Endothelial cell of umbilical vein (primary cell): ENCODE measurements at regions of chr1 and their contacts with region 1.

Region 1: GRCh38 chr1:65687428-65688214 is 105.1 kb upstream of the PDE4B start:
- DNase-seq: peak; percentile 87
- H3K4me3 ChIP-seq: no peak overlapping the region
- H3K27ac ChIP-seq: no peak overlapping the region
- H3K4me1 ChIP-seq: peaks cover 15% of the 10 kb centered on the region
- H3K27me3 ChIP-seq: no peaks in the 10 kb centered on the region
- CTCF ChIP-seq: peak; percentile 72 to 86
- POLR2A ChIP-seq: no peak

Region 2: GRCh38 chr1:64834734-64835133 is 852.9 kb before region 1 on chr1:
- CTCF ChIA-PET with region 1: interaction called, 3 read pairs
- POLR2A ChIA-PET with region 1: no interaction called
- dilution Hi-C with region 1: no loop called
- intact Hi-C with region 1: loop called (anchors 10 kb)
- DNase-seq: no peak
- H3K4me3 ChIP-seq: no peak overlapping the region
- H3K27ac ChIP-seq: peak overlapping the region; percentile 4
- H3K4me1 ChIP-seq: peaks cover 48% of the 10 kb centered on the region
- H3K27me3 ChIP-seq: no peaks in the 10 kb centered on the region
- CTCF ChIP-seq: no peak
- POLR2A ChIP-seq: no peak

Region 3: GRCh38 chr1:65075123-65075976 is 612.3 kb before region 1 on chr1:
- CTCF ChIA-PET with region 1: interaction called, 22 read pairs
- POLR2A ChIA-PET with region 1: no interaction called
- dilution Hi-C with region 1: no loop called
- intact Hi-C with region 1: loop called (anchors 1 kb)
- DNase-seq: peak; percentile 75
- H3K4me3 ChIP-seq: no peak overlapping the region
- H3K27ac ChIP-seq: no peak overlapping the region
- H3K4me1 ChIP-seq: no peaks in the 10 kb centered on the region
- H3K27me3 ChIP-seq: peaks cover 0 to 3% of the 10 kb centered on the region in 2 experiments
- CTCF ChIP-seq: peak; percentile 74 to 76
- POLR2A ChIP-seq: no peak

Region 4: DNA sequence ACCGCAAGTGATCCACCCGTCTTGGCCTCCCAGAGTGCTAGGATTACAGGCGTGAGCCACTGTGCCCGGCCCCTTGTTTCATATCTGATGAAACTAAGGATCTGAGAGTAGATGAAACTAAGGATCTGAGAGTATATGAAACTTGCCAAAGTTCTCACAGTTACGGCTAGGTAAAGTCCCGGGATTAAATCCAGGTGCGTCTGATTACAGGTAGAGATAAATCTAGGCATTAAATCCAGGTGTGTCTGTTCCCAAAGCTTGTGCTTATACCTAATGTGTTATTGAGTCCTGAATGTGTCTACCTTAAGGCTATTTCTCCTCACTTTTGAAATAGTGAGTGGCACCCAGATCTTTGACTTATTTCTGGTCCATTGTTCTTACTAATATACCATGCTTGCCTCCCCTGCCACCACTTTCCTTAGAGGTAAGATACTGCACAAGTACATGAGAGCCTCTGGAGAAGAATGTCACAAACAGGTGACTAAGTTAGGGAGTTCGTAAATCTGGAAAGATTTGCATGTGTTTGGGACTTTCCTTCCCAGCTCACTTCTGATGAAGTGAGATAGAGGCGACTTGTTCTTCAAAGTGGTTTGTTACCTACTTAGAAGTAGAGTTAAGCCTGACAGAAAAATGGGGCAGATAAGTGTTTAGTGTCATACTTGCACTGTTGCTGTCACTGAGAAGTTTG is 473.1 kb before region 1 on chr1:
- CTCF ChIA-PET with region 1: interaction called, 169 read pairs
- POLR2A ChIA-PET with region 1: no interaction called
- dilution Hi-C with region 1: no loop called
- intact Hi-C with region 1: loop called (anchors 1 kb)
- DNase-seq: no peak
- H3K4me3 ChIP-seq: no peak overlapping the region
- H3K27ac ChIP-seq: no peak overlapping the region
- H3K4me1 ChIP-seq: no peaks in the 10 kb centered on the region
- H3K27me3 ChIP-seq: no peaks in the 10 kb centered on the region
- CTCF ChIP-seq: no peak
- POLR2A ChIP-seq: no peak

Region 5: DNA sequence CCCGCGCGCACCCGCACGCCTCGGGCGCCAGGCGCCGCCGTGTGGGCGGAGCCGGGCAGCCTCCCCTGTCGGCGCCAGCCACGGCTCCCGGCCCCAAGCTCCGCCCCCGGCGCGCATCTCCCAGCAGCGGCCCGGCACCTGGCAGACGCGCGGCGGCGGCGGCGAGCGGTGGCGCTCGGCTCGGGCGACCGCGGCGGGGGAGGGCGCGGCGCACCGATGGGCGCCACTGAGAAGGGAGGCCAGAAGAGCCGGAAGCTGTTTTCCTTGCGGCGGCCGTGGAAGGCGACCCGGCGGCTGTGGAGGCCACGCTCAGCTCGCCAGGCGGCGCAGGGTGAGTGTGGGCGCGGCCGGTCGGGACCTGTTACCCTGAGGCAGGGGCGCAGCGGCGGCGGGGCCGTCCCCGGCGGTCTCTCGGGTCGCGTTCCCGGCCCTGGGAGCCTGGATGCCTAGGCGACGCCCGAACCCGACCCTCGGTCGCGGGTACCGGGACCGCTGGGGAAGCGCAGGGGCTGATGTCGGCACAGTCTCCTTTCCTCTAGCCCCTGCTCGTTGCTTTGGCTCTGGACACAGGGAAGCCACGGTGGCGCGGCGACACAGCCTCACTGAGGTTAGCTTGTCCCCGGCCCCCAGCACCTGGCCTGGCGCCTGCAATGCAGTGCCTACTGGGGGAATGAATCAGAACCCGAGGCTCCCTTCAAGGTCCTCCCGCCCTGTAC is 433.1 kb before region 1 on chr1:
- CTCF ChIA-PET with region 1: interaction called, 24 read pairs
- POLR2A ChIA-PET with region 1: no interaction called
- dilution Hi-C with region 1: no loop called
- intact Hi-C with region 1: loop called (anchors 1 kb)
- DNase-seq: peak; percentile 57
- H3K4me3 ChIP-seq: peak overlapping the region; percentile 44 to 80 (median 70)
- H3K27ac ChIP-seq: peak overlapping the region; percentile 1
- H3K4me1 ChIP-seq: peaks cover 13% of the 10 kb centered on the region
- H3K27me3 ChIP-seq: no peaks in the 10 kb centered on the region
- CTCF ChIP-seq: peak in 1 of 2 donors; percentile 30
- POLR2A ChIP-seq: no peak

Region 6: DNA sequence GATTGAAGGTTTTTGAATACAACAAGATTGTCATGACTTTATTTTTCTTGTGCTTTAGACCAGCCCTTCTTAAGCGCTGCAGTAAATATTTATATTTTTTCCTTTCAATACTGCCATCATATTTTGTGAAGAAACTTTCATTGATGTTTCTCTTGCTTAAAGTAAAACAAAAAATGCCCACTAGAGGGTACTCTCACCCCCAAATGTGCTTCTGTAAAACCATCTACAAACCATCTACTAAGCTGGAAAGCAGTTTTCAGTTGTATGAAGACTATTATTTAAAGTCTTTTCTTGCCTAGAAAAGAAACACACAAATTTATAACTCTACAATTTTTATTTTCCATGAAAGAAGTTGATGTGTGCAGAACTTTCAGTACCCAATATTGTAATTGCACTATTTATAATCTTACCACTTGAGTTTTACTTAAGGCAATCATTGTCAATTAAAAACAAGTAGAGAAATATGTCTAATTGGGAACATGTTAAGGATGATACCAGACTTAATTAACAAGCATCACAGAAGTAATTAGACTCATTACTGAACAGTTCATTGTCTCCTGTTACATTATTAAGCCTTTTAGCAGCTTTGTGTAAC is 256.4 kb before region 1 on chr1:
- CTCF ChIA-PET with region 1: interaction called, 104 read pairs
- POLR2A ChIA-PET with region 1: no interaction called
- dilution Hi-C with region 1: no loop called
- intact Hi-C with region 1: loop called (anchors 1 kb)
- DNase-seq: peak; percentile 79
- H3K4me3 ChIP-seq: peak overlapping the region in 1 of 3 experiments; percentile 26
- H3K27ac ChIP-seq: peak overlapping the region; percentile 97
- H3K4me1 ChIP-seq: peaks cover 33% of the 10 kb centered on the region
- H3K27me3 ChIP-seq: no peaks in the 10 kb centered on the region
- CTCF ChIP-seq: peak; percentile 35 to 36
- POLR2A ChIP-seq: no peak

Region 7: DNA sequence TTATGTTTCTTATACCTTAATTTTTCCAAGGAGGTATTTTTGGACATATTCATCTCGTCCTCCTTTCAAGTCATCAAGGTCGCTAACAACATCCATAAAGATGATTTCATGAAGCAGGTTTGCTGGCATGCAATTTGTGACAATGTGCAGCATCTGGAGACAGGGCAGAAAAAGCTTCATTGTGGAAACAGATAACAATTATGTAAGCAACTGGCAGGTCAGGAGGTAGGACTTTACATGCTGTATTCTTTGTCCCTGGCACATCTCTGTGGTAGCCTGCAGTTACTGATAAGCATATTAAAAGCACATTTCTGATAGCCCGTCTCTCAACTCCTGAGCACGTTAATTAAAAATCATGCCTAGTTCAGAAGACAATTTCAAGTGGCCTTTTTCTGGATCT is 110.3 kb before region 1 on chr1:
- CTCF ChIA-PET with region 1: no interaction called
- POLR2A ChIA-PET with region 1: no interaction called
- dilution Hi-C with region 1: no loop called
- intact Hi-C with region 1: no loop called
- DNase-seq: no peak
- H3K4me3 ChIP-seq: no peak overlapping the region
- H3K27ac ChIP-seq: no peak overlapping the region
- H3K4me1 ChIP-seq: no peaks in the 10 kb centered on the region
- H3K27me3 ChIP-seq: no peaks in the 10 kb centered on the region
- CTCF ChIP-seq: no peak
- POLR2A ChIP-seq: no peak

Region 8: GRCh38 chr1:65674522-65674921 is 13.1 kb before region 1 on chr1:
- CTCF ChIA-PET with region 1: interaction called, 31 read pairs
- POLR2A ChIA-PET with region 1: no interaction called
- dilution Hi-C with region 1: no loop called
- intact Hi-C with region 1: no loop called
- DNase-seq: no peak
- H3K4me3 ChIP-seq: no peak overlapping the region
- H3K27ac ChIP-seq: no peak overlapping the region
- H3K4me1 ChIP-seq: no peaks in the 10 kb centered on the region
- H3K27me3 ChIP-seq: no peaks in the 10 kb centered on the region
- CTCF ChIP-seq: no peak
- POLR2A ChIP-seq: no peak